H1 (cell line): ENCODE measurements at regions of chr6 and their contacts with region 1.

Region 1: DNA sequence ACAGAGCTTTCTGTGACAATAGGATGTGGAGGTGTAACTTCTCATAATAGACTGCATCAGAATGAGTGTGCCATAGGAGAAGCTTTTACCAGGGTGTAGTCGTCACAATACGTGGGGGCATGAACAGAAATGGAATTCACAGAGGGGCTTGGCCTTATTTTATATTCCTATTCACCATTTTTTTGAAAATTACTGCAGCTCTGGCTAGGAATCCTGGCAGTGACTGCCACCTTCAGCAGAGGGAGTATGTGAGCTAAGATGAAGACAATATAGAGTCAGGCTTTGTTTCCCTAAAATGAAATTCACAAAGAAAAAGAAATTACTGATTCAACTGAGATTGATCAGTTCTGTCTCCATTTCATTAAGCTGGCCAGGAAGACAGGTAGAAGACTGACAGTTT is 13.9 kb downstream of the TOMM6 start:
- DNase-seq: no peak
- H3K4me3 ChIP-seq: no peak overlapping the region
- H3K27ac ChIP-seq: no peak overlapping the region
- H3K4me1 ChIP-seq: no peaks in the 10 kb centered on the region
- H3K27me3 ChIP-seq: no peaks in the 10 kb centered on the region
- CTCF ChIP-seq: peak in 2 of 3 experiments; percentile 35 to 41; a peak in 2 of 4 replicates
- EP300 ChIP-seq: no peak
- POLR2A ChIP-seq: no peak
- RAD21 ChIP-seq: peak; percentile 47 to 57

Region 2: DNA sequence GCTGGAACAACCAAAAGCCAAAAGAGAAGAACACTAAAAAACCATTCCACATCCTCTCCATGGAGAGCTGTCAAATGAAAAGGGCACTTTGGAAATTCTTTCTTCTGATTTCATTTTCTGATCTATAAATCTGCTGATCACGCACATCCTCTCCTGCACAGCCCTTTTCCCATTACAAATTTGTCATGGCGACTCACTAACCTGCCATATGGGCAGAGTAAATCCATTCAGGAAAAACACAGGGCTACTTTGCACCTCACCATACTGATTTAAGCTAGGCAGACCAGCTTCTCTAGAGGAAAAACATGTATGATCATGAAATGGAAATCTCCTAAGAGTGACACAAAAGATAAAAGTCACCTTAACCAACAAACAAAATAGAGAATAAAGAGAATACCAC is 12.1 kb after region 1 on chr6:
- CTCF ChIA-PET with region 1: interaction called, 11 read pairs
- POLR2A ChIA-PET with region 1: interaction called, 4 read pairs
- DNase-seq: no peak
- H3K4me3 ChIP-seq: no peak overlapping the region
- H3K27ac ChIP-seq: no peak overlapping the region
- H3K4me1 ChIP-seq: no peaks in the 10 kb centered on the region
- H3K27me3 ChIP-seq: no peaks in the 10 kb centered on the region
- CTCF ChIP-seq: no peak
- EP300 ChIP-seq: no peak
- POLR2A ChIP-seq: no peak
- RAD21 ChIP-seq: no peak